Stomach (tissue), 19 donors: ENCODE measurements at regions of chr1 and their contacts with region 1.

Region 1: DNA sequence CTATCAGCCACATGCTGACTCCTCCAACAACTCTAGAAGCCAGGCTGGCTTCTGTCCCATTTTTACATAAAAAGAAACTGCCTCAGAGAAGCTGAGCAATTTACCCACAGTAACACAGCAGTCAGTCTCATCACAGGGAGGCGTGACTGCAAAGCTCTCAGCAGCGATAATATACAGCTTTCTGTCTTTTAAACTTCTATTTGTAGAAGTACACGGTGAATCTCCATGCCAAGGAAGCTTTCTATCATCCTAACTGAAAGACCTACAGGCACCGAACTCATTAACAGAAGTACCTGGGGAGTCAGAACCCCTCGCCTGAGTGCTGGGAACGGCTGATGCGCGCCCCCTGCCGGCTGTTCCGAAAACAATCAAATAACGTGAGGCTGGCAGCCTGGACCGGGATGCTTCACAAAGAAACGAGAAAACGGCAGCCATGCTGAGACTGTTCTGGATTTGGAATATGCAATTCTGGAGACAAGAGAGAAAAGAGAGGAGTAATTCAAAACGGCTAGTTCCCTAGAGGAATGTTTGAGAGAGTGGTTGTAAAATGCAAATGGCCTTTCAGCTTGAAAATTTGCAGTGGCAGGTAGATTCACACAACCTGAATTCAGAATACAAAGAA is 43.5 kb upstream of the RAB4A start:
- DNase-seq: peak; percentile 88 to 93
- H3K4me3 ChIP-seq: no peak overlapping the region
- H3K27ac ChIP-seq: peak overlapping the region in 1 of 5 donors; percentile 20
- H3K4me1 ChIP-seq: peaks cover 39 to 80% (median 61%) of the 10 kb centered on the region in 4 donors
- H3K27me3 ChIP-seq: no peaks in the 10 kb centered on the region
- CTCF ChIP-seq: peak in 6 of 7 experiments; percentile 9 to 90 (median 78)
- EP300 ChIP-seq: no peak
- POLR2A ChIP-seq: no peak

Region 2: GRCh38 chr1:228664399-228664914 is 563.0 kb before region 1 on chr1:
- intact Hi-C with region 1: loop called (anchors 10 kb)
- DNase-seq: peak; percentile 85 to 90
- H3K4me3 ChIP-seq: no peak overlapping the region
- H3K27ac ChIP-seq: peak overlapping the region in 4 of 5 donors; percentile 9 to 61 (median 50)
- H3K4me1 ChIP-seq: peaks cover 0 to 14% (median 6%) of the 10 kb centered on the region in 4 donors
- H3K27me3 ChIP-seq: peaks cover 0 to 6% (median 0%) of the 10 kb centered on the region in 3 donors
- CTCF ChIP-seq: peak in 5 of 7 experiments; percentile 44 to 84 (median 76)
- EP300 ChIP-seq: no peak
- POLR2A ChIP-seq: no peak

Region 3: GRCh38 chr1:228734881-228735801 is 492.3 kb before region 1 on chr1 and contains the start of gene RHOU:
- intact Hi-C with region 1: loop called (anchors 10 kb)
- DNase-seq: peak; percentile 82 to 94
- H3K4me3 ChIP-seq: peak within 1 kb of the TSS; percentile 73 to 94 (median 74)
- H3K27ac ChIP-seq: peak within 1 kb of the TSS; percentile 95 to 99 (median 96)
- H3K4me1 ChIP-seq: peaks cover 24 to 46% (median 34%) of the 10 kb centered on the region in 4 donors
- H3K27me3 ChIP-seq: no peaks in the 10 kb centered on the region
- CTCF ChIP-seq: peak in 5 of 7 experiments; percentile 43 to 98 (median 81)
- EP300 ChIP-seq: no peak
- POLR2A ChIP-seq: peak in 1 of 4 donors; percentile 42
- total RNA-seq, gene RHOU: 1.2 to 75.5 (median 30.0) TPM

Region 4: DNA sequence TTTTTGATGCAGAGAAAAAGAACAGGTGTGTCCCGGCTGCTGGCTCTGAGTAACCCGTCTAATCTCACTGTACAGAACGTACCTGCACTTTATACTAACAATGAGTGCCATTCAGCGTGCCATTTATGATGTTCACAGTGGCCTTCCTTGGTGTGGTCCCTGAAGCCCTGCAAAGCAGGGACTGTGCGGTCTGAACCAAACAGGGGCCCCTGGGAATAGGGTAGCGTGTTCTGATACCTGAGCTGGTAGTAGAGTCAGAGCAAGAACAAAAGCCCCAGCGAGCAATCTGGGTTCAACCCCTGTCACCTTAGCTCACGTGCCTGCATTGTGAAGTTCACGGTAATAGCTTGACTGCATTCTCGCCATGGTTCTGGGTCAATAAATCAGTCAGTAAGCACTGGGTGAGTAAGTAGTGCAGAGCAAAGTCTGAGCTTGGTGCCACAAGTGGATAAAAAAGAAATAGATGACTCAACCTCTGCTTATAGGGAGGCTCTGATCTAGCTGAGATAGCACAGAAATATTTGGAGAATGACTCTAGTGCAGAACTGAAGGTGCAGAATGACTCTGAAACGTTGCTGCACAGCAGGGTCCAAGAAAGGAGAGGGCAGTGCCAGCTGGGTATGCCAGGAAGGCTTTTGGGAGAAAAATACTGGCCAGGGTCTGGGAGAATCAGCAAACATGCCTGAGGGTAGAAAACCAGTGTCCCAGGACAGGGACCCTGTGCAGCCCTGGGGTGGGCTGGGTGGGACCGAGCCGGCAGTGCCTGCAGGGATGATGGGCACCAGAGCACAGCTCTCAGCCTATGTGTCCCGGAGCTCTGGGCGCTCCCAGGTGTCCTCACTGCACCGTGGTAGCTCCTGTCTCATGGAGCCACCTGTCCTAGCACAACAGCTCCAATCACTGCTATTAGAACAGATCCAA is 366.2 kb before region 1 on chr1:
- intact Hi-C with region 1: no loop called
- DNase-seq: peak; percentile 58 to 87
- H3K4me3 ChIP-seq: no peak overlapping the region
- H3K27ac ChIP-seq: peak overlapping the region; percentile 61 to 84 (median 73)
- H3K4me1 ChIP-seq: peaks cover 30 to 53% (median 43%) of the 10 kb centered on the region in 4 donors
- H3K27me3 ChIP-seq: no peaks in the 10 kb centered on the region
- CTCF ChIP-seq: no peak
- EP300 ChIP-seq: no peak
- POLR2A ChIP-seq: no peak